ENCODE measurements at regions of chr3 and their contacts with region 1.

Region 1: GRCh38 chr3:141561426-141562034 is 74.7 kb downstream of the RASA2 start:
- DNase-seq: no peak
- ATAC-seq: no peak
- H3K4me3 ChIP-seq: no peak overlapping the region
- H3K27ac ChIP-seq: no peak overlapping the region
- H3K4me1 ChIP-seq: no peaks in the 10 kb centered on the region
- H3K27me3 ChIP-seq: no peaks in the 10 kb centered on the region
- CTCF ChIP-seq: peak; percentile 83 to 99 (median 86)
- POLR2A ChIP-seq: no peak

Region 2: DNA sequence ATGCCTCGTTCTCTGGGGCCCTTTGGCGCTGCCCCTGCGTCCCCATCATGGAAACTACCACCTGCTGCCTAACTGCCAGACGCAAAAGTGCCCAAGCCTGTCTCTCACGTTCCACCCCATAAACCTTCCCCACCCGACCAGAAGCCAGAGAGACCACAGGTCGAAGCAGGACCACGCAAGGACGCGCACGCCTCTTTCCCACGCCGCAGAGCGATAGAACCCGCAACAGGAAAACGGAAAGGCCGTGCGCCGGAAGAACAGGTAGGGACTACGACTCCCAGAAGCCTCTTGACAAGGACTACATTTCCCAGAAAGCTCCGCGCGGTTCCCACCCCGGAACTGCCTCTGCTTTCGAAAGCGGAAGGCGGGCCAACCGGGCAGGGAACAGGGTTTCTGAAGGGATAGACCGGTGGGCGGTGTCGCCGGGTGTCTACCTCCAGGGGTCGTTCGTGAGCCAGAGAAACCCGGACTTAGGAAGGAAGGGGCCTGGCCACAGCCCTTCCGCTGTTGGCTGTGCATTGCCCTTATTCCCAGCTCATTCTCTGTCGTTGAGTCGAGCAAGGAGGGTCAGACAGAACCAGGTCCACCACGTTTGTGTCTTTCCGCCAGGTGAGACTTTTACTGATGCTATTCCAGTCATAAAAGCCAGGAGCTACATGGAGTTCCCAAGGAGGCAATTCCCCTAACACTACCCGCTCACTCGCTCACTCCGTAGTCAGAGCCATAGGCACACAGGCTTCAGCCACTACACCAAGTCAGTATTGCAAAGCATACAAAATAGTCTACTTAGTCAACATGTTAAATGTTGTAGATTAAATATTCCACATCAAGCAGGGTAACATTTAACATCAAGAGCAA is 249.8 kb before region 1 on chr3:
- in situ Hi-C with region 1: loop called in 1 of 4 experiments (anchors 25 kb)
- intact Hi-C with region 1: no loop called
- DNase-seq: peak; percentile 96 to 97
- ATAC-seq: peak; percentile 99 to 100
- H3K4me3 ChIP-seq: peak overlapping the region; percentile 65 to 80 (median 70)
- H3K27ac ChIP-seq: peak overlapping the region; percentile 81 to 83 (median 82)
- H3K4me1 ChIP-seq: peaks cover 4 to 10% of the 10 kb centered on the region in 2 donors
- H3K27me3 ChIP-seq: no peaks in the 10 kb centered on the region
- CTCF ChIP-seq: peak; percentile 59 to 81 (median 75)
- POLR2A ChIP-seq: peak; percentile 38 to 39

Region 3: GRCh38 chr3:141370065-141370533 is 191.4 kb before region 1 on chr3:
- in situ Hi-C with region 1: loop called in 3 of 4 experiments (anchors 25 kb)
- intact Hi-C with region 1: no loop called
- DNase-seq: peak; percentile 45 to 68
- ATAC-seq: peak; percentile 71 to 80
- H3K4me3 ChIP-seq: peak overlapping the region; percentile 8 to 48 (median 44)
- H3K27ac ChIP-seq: peak overlapping the region; percentile 88 to 96 (median 94)
- H3K4me1 ChIP-seq: peaks cover 27 to 55% of the 10 kb centered on the region in 2 donors
- H3K27me3 ChIP-seq: no peaks in the 10 kb centered on the region
- CTCF ChIP-seq: peak in 2 of 5 experiments; percentile 21 to 30
- POLR2A ChIP-seq: peak; percentile 50 to 65

Region 4: GRCh38 chr3:141460097-141460704 is 101.3 kb before region 1 on chr3:
- in situ Hi-C with region 1: loop called in 3 of 4 experiments (anchors 5 kb)
- intact Hi-C with region 1: loop called (anchors 1 kb)
- DNase-seq: peak; percentile 60 to 79
- ATAC-seq: peak; percentile 81 to 87
- H3K4me3 ChIP-seq: no peak overlapping the region
- H3K27ac ChIP-seq: no peak overlapping the region
- H3K4me1 ChIP-seq: peaks cover under 1 to 4% of the 10 kb centered on the region in 2 donors
- H3K27me3 ChIP-seq: no peaks in the 10 kb centered on the region
- CTCF ChIP-seq: peak; percentile 72 to 91 (median 81)
- POLR2A ChIP-seq: no peak

Measured in gastrocnemius medialis (tissue), 4 donors.